ENCODE measurements at regions of chr12 and their contacts with region 1.

Region 1: DNA sequence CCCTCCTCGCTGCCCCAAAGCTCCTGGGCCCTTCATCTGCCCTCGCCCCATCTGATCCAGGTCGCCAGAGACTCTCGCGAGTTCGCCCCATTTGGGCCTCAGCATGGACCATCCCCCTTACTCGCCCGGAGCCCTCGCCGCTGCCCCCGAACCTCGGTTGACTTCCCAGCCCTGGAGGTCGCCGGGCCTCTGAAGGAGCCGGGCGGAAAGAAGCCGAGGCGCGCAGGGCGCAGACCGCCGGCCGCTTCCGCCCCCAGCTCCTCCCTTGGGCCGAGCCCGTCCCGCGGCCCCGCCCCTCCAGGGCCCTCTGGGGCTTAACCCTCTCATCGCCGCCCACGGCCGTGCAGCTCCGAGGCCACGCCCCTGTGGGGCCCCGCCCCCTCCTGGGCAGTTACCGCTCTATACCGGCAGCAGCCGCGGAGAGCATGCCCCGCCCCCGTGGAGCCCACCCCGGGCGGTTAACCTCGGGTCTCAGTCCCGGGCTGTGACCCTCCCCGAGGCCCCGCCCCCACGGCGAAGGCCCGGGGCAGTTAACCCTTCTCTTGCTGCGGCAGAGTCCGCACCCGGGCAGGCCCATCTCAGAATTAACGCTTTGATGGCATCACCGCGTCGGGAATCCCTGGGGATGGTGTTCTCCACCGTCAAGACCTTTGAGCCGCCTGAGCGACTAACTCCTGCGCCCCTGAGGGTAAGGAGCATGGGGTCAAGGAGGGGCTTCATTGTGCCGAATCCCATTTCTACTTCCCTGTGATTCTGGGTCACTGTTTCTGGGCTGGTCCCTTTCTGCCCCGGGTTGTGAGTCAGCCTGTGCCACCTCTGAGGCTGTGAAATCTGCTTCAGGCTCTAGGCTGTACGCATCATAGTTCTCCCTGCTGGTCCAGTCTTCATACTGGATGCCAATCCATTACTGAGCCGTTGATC is at the start of gene SPSB2:
- DNase-seq: peak; percentile 99
- ATAC-seq: peak; percentile 79
- H3K4me3 Mint-ChIP-seq: peak within 1 kb of the TSS; percentile 77
- H3K27ac Mint-ChIP-seq: peak within 1 kb of the TSS; percentile 91
- H3K4me1 Mint-ChIP-seq: peaks cover 58% of the 10 kb centered on the region
- H3K27me3 Mint-ChIP-seq: no peaks in the 10 kb centered on the region
- total RNA-seq, gene SPSB2: 10.5 to 14.4 TPM

Region 2: GRCh38 chr12:6723607-6724396 is 149.6 kb before region 1 on chr12 and contains the start of gene COPS7A:
- CTCF ChIA-PET with region 1: interaction called, 11 read pairs
- DNase-seq: peak; percentile 99
- ATAC-seq: peak; percentile 95
- H3K4me3 Mint-ChIP-seq: peak within 1 kb of the TSS; percentile 79
- H3K27ac Mint-ChIP-seq: peak within 1 kb of the TSS; percentile 89
- H3K4me1 Mint-ChIP-seq: peaks cover 21% of the 10 kb centered on the region
- H3K27me3 Mint-ChIP-seq: no peaks in the 10 kb centered on the region
- total RNA-seq, gene COPS7A: 28.2 to 30.0 TPM

Region 3: GRCh38 chr12:6851921-6852650 is 21.3 kb before region 1 on chr12 and contains the start of gene USP5:
- CTCF ChIA-PET with region 1: interaction called, 65 read pairs
- DNase-seq: peak; percentile 100
- ATAC-seq: peak; percentile 82
- H3K4me3 Mint-ChIP-seq: peak within 1 kb of the TSS; percentile 85
- H3K27ac Mint-ChIP-seq: peak within 1 kb of the TSS; percentile 100
- H3K4me1 Mint-ChIP-seq: peaks cover 45% of the 10 kb centered on the region
- H3K27me3 Mint-ChIP-seq: no peaks in the 10 kb centered on the region
- total RNA-seq, gene USP5: 98.8 to 129 TPM

Region 4: GRCh38 chr12:6937481-6938297 is 64.3 kb after region 1 on chr12:
- CTCF ChIA-PET with region 1: interaction called, 36 read pairs
- DNase-seq: peak; percentile 97
- ATAC-seq: peak; percentile 94
- H3K4me3 Mint-ChIP-seq: peak overlapping the region; percentile 87
- H3K27ac Mint-ChIP-seq: peak overlapping the region; percentile 96
- H3K4me1 Mint-ChIP-seq: peaks cover 45% of the 10 kb centered on the region
- H3K27me3 Mint-ChIP-seq: no peaks in the 10 kb centered on the region

Region 5: GRCh38 chr12:6959058-6959804 is 85.9 kb after region 1 on chr12:
- CTCF ChIA-PET with region 1: interaction called, 13 read pairs
- DNase-seq: peak; percentile 87
- ATAC-seq: peak; percentile 61
- H3K4me3 Mint-ChIP-seq: peak overlapping the region; percentile 79
- H3K27ac Mint-ChIP-seq: peak overlapping the region; percentile 96
- H3K4me1 Mint-ChIP-seq: peaks cover 84% of the 10 kb centered on the region
- H3K27me3 Mint-ChIP-seq: no peaks in the 10 kb centered on the region